GM12878 (cell line): ENCODE measurements at regions of chr3 and their contacts with region 1.

Region 1: DNA sequence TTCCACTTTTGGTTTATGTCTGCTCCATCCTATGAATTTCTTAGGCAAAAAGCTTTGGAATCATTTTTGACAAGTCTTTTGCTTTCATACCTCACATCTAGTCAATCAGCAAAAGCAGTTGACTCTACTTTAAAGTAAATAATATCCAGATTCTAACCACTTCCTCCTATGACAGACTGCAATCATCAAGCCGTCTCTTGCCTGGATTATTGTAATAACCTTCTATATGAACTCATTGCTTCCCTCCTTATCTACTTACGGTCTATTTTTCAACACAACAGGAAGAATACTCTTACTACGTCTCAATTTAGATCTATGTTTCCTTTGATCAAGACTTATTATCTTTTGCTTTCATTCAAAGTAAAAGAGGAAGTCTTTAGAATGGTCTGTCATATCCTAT is 20.7 kb downstream of the CLDN1 start:
- DNase-seq: no peak
- ATAC-seq: peak; percentile 41
- H3K4me3 ChIP-seq: no peak overlapping the region
- H3K27ac ChIP-seq: no peak overlapping the region
- H3K4me1 ChIP-seq: no peaks in the 10 kb centered on the region
- H3K27me3 ChIP-seq: no peaks in the 10 kb centered on the region
- CTCF ChIP-seq: no peak
- EP300 ChIP-seq: no peak
- POLR2A ChIP-seq: no peak
- RAD21 ChIP-seq: no peak

Region 2: GRCh38 chr3:190288836-190289235 is 12.8 kb before region 1 on chr3:
- CTCF ChIA-PET with region 1: interaction called, 7 read pairs
- POLR2A ChIA-PET with region 1: interaction called, 3 read pairs
- RAD21 ChIA-PET with region 1: interaction called, 5 read pairs
- SMC1A ChIA-PET with region 1: interaction called, 11 read pairs
- in situ Hi-C with region 1: no loop called
- intact Hi-C with region 1: no loop called
- DNase-seq: no peak
- ATAC-seq: no peak
- H3K4me3 ChIP-seq: no peak overlapping the region
- H3K27ac ChIP-seq: no peak overlapping the region
- H3K4me1 ChIP-seq: no peaks in the 10 kb centered on the region
- H3K27me3 ChIP-seq: no peaks in the 10 kb centered on the region
- CTCF ChIP-seq: no peak
- EP300 ChIP-seq: no peak
- POLR2A ChIP-seq: no peak
- RAD21 ChIP-seq: no peak

Region 3: GRCh38 chr3:190414297-190414696 is 112.7 kb after region 1 on chr3:
- CTCF ChIA-PET with region 1: no interaction called
- POLR2A ChIA-PET with region 1: no interaction called
- RAD21 ChIA-PET with region 1: no interaction called
- SMC1A ChIA-PET with region 1: no interaction called
- in situ Hi-C with region 1: no loop called
- intact Hi-C with region 1: no loop called
- DNase-seq: no peak
- ATAC-seq: no peak
- H3K4me3 ChIP-seq: no peak overlapping the region
- H3K27ac ChIP-seq: no peak overlapping the region
- H3K4me1 ChIP-seq: no peaks in the 10 kb centered on the region
- H3K27me3 ChIP-seq: no peaks in the 10 kb centered on the region
- CTCF ChIP-seq: no peak
- EP300 ChIP-seq: no peak
- POLR2A ChIP-seq: no peak
- RAD21 ChIP-seq: no peak